Sigmoid colon (tissue), 7 donors: ENCODE measurements at regions of chr9 and their contacts with region 1.

Region 1: GRCh38 chr9:2837915-2838314 is 6.0 kb downstream of the PUM3 start:
- DNase-seq: no peak
- H3K4me3 ChIP-seq: peak overlapping the region in 2 of 4 donors; percentile 17 to 24
- H3K27ac ChIP-seq: peak overlapping the region; percentile 37 to 59 (median 52)
- H3K4me1 ChIP-seq: peaks cover 0 to 60% (median 49%) of the 10 kb centered on the region in 4 donors
- H3K27me3 ChIP-seq: no peaks in the 10 kb centered on the region
- CTCF ChIP-seq: peak in 1 of 4 experiments; percentile 20
- EP300 ChIP-seq: no peak
- POLR2A ChIP-seq: no peak

Region 2: GRCh38 chr9:2132484-2133082 is 705.3 kb before region 1 on chr9:
- intact Hi-C with region 1: loop called (anchors 5 kb)
- DNase-seq: no peak
- H3K4me3 ChIP-seq: no peak overlapping the region
- H3K27ac ChIP-seq: no peak overlapping the region
- H3K4me1 ChIP-seq: peaks cover 0 to 59% (median 30%) of the 10 kb centered on the region in 4 donors
- H3K27me3 ChIP-seq: no peaks in the 10 kb centered on the region
- CTCF ChIP-seq: peak in 3 of 4 experiments; percentile 53 to 83 (median 68)
- EP300 ChIP-seq: no peak
- POLR2A ChIP-seq: no peak

Region 3: DNA sequence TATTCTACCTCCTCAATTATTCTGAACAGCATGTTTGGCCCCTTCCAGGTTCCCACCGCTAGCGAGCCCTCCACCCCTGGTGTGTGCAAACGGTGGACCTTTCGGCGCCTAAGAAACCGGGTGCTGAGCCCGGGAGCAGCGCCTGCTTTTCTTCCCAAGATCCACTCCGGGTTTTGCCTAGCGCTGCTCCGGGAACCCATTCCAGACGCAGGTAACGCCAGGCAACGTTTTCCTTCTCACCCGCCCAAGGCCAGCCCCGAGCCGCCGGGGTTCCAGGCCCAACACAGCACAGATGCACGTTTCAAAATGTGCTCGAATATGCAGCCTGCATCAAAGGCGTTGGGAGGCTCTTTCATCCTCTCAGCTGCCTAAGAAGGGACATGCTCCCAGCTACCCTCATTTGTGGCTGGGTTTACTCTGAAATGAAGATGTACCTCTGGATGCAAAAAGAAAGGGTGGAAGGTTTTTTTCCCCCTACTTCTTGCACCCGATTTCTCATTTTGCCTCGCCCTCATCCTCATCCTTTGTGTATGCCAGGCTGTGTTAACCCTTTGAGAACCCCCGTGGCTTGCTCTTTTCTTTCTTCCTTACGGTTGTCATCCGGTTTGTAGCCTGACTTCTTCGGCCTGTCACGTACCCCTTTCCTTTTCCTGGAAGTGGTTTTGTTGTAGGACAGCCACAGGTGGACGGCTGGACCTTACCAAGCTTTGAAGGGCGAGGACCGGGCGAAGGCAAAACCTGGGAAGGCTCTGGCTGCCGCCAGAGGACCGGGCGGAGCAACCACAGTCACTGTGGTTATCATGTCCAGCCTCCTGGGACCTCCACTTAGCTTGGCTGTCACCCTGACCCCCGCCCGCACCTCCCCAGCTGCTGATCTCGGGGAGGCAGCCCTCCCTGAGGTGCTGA is 595.8 kb before region 1 on chr9:
- intact Hi-C with region 1: loop called (anchors 5 kb)
- DNase-seq: peak; percentile 90
- H3K4me3 ChIP-seq: peak overlapping the region; percentile 16 to 53 (median 47)
- H3K27ac ChIP-seq: peak overlapping the region; percentile 62 to 76 (median 64)
- H3K4me1 ChIP-seq: peaks cover 2 to 22% (median 12%) of the 10 kb centered on the region in 4 donors
- H3K27me3 ChIP-seq: no peaks in the 10 kb centered on the region
- CTCF ChIP-seq: no peak
- EP300 ChIP-seq: no peak
- POLR2A ChIP-seq: no peak

Region 4: DNA sequence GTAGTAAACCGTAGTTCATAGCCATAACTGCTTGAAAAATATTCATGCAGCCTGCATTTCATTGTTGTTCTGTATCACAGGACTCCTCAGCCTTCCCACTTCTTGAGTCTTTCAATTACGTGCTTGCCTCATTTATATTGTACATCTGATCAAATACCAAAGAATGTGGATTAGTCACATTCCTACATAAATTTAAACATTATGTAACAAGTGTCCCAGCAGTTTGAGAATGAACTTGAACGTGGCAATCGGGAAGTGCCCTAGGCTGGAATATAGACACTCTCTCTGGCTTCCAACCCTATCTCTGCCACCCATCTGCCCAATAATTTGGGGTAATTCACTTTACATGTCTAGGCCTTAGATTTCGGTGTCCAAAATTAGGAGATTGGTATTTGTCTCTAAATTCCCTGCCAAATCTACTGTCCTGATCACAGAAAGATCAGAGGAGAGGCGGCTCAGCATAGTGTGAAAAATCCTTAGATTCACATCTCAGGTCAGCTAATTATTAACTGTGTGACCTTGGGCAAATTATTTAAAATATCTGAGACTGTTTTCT is 902.9 kb after region 1 on chr9:
- intact Hi-C with region 1: no loop called
- DNase-seq: no peak
- H3K4me3 ChIP-seq: no peak overlapping the region
- H3K27ac ChIP-seq: no peak overlapping the region
- H3K4me1 ChIP-seq: peaks cover 0 to 1% (median 0%) of the 10 kb centered on the region in 4 donors
- H3K27me3 ChIP-seq: no peaks in the 10 kb centered on the region
- CTCF ChIP-seq: no peak
- EP300 ChIP-seq: no peak
- POLR2A ChIP-seq: no peak